CD14-positive monocyte (primary cell): ENCODE measurements at regions of chr17 and their contacts with region 1.

Region 1: DNA sequence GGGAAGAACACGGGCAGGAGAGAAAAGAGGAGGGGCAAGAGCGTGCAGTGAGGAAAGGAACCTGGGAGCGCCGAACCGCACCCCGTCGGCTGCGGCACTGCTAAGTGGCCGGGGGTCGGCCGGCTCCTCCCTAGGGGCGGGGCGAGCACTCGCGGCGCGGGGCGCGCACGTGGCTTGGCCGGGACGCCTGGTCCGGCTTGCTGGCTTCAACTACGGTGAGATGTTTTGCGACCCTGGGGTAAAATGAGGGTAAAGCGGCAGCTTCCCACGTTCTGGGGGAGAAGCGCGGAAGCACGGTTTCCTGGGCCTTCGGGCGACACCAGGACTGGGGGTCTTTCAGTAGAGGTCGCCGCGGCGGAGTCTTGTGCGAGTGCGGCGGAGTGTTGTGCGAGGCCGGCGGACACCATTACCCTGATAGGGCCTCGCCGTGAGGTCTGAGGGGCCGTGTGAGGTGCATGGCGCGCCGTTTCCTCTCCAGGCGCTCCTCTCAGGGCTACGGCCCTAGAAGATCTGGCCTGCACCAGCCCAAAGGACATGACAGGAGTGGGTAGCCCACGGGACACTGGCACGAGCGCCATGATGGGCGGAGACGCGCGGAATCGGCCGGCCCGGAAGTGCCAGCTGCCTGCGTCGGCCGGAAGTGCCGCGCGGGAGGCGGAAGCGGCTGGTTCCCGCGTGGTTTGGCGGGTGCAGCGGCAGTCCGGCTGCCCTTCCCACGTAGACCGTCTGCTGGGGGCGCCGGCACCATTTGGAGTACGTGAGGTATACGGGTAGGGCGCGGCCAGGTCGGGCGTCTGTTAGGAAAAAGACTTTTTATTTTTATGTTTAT is at the starts of genes MYO19 and PIGW:
- DNase-seq: peak; percentile 86 to 89 (median 87)
- H3K4me3 ChIP-seq: peak within 1 kb of the TSS; percentile 71 to 99 (median 97)
- H3K4me3 Mint-ChIP-seq: peak within 1 kb of the TSS; percentile 95 to 96
- H3K27ac ChIP-seq: peak within 1 kb of the TSS; percentile 97 to 98
- H3K27ac Mint-ChIP-seq: peak within 1 kb of the TSS; percentile 94 to 99 (median 98)
- H3K4me1 ChIP-seq: peaks cover 15 to 20% of the 10 kb centered on the region in 2 donors
- H3K4me1 Mint-ChIP-seq: peaks cover 18% of the 10 kb centered on the region
- H3K27me3 ChIP-seq: no peaks in the 10 kb centered on the region
- H3K27me3 Mint-ChIP-seq: peaks cover 0 to 2% (median 0%) of the 10 kb centered on the region in 3 donors
- CTCF ChIP-seq: no peak
- polyA plus RNA-seq, gene MYO19: 1.2 to 51.3 (median 1.9) TPM
- polyA plus RNA-seq, gene PIGW: 3.1 to 5.9 (median 3.7) TPM

Region 2: GRCh38 chr17:36486204-36487194 is 48.6 kb before region 1 on chr17 and contains the start of gene ZNHIT3:
- intact Hi-C with region 1: loop called (anchors 5 kb)
- DNase-seq: peak; percentile 80 to 86 (median 86)
- H3K4me3 ChIP-seq: peak within 1 kb of the TSS; percentile 83 to 86 (median 85)
- H3K4me3 Mint-ChIP-seq: peak within 1 kb of the TSS; percentile 98 to 99
- H3K27ac ChIP-seq: peak within 1 kb of the TSS; percentile 45 to 73
- H3K27ac Mint-ChIP-seq: peak within 1 kb of the TSS; percentile 71 to 95 (median 93)
- H3K4me1 ChIP-seq: peaks cover 24 to 32% of the 10 kb centered on the region in 2 donors
- H3K4me1 Mint-ChIP-seq: peaks cover 28% of the 10 kb centered on the region
- H3K27me3 ChIP-seq: peaks cover 6 to 15% of the 10 kb centered on the region in 2 donors
- H3K27me3 Mint-ChIP-seq: peaks cover 12 to 23% (median 14%) of the 10 kb centered on the region in 3 donors
- CTCF ChIP-seq: no peak
- polyA plus RNA-seq, gene ZNHIT3: 27.6 to 70.4 (median 63.5) TPM

Region 3: GRCh38 chr17:36493956-36494355 is 41.1 kb before region 1 on chr17:
- intact Hi-C with region 1: loop called (anchors 5 kb)
- DNase-seq: no peak
- H3K4me3 ChIP-seq: no peak overlapping the region
- H3K4me3 Mint-ChIP-seq: no peak overlapping the region
- H3K27ac ChIP-seq: no peak overlapping the region
- H3K27ac Mint-ChIP-seq: peak overlapping the region in 1 of 7 donors; percentile 45
- H3K4me1 ChIP-seq: no peaks in the 10 kb centered on the region
- H3K4me1 Mint-ChIP-seq: peaks cover 4% of the 10 kb centered on the region
- H3K27me3 ChIP-seq: no peaks in the 10 kb centered on the region
- H3K27me3 Mint-ChIP-seq: no peaks in the 10 kb centered on the region
- CTCF ChIP-seq: no peak